ENCODE measurements at regions of chr11 and their contacts with region 1.

Region 1: DNA sequence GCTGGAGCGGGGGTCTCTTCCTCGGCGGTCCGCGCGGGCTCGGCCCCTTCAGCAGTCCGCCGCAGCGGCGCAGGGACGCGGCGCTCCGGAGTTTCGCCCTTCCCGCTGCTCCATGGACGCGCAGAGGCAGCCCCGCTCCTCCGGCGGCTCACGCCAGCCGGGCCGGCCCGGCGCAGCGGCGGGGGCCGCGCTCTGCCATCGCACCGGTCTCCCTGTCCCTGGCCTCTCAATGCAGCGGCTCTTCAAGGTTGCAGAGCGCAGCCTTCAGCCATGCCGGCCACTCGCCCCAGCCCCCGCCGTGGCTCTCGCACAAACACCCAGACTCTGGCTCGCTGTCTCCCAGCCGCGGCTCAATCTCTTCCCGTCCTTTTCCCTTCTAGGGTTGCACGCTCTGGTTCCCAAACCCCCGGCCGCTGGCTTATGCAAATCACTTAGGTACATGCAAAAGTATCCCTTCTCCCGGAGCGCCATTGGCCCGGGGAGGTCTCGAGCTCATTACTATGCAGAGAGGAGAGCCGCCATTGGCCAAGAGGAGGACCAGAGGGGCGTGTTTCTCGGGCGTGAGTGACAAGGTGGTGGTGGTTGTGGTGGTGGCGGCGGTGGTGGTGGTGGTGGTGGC is at the start of gene LGR4:
- DNase-seq: peak; percentile 94 to 95
- H3K4me3 ChIP-seq: peak within 1 kb of the TSS; percentile 92
- H3K27ac ChIP-seq: peak within 1 kb of the TSS; percentile 94
- H3K4me1 ChIP-seq: peaks cover 37% of the 10 kb centered on the region
- H3K27me3 ChIP-seq: no peaks in the 10 kb centered on the region
- CTCF ChIP-seq: no peak
- total RNA-seq, gene LGR4: 33.4 and 37.4 TPM in 2 replicates

Region 2: DNA sequence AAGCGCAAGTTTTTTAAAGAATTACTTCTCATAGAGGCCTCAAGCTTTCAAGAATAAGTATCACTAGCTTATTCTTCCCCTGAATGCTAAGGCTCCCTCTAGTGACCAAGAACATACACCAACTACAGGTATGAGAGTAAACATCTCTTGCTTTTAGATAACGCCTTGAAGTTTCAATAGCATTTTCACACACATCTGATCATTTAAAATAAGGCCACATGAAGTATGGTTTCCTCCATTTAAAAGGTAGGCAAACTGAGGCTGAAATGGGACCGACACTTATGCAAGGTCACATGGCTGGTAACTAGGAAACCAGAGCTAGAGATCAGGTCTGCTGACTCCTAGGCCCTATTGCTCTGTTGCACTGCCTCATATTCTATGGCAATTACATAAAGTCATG is 176.0 kb before region 1 on chr11:
- CTCF ChIA-PET with region 1: no interaction called
- POLR2A ChIA-PET with region 1: interaction called, 25 read pairs
- intact Hi-C with region 1: loop called (anchors 5 kb)
- DNase-seq: peak in 1 of 2 experiments; percentile 4
- H3K4me3 ChIP-seq: no peak overlapping the region
- H3K27ac ChIP-seq: no peak overlapping the region
- H3K4me1 ChIP-seq: no peaks in the 10 kb centered on the region
- H3K27me3 ChIP-seq: no peaks in the 10 kb centered on the region
- CTCF ChIP-seq: peak; percentile 74

Region 3: GRCh38 chr11:27392278-27393114 is 80.0 kb before region 1 on chr11:
- CTCF ChIA-PET with region 1: no interaction called
- POLR2A ChIA-PET with region 1: interaction called, 17 read pairs
- intact Hi-C with region 1: no loop called
- DNase-seq: peak; percentile 25 to 88
- H3K4me3 ChIP-seq: no peak overlapping the region; the same call in 1 of the 2 replicates
- H3K27ac ChIP-seq: peak overlapping the region; percentile 66
- H3K4me1 ChIP-seq: peaks cover 75% of the 10 kb centered on the region
- H3K27me3 ChIP-seq: no peaks in the 10 kb centered on the region
- CTCF ChIP-seq: no peak

Region 4: GRCh38 chr11:27485930-27486773 is 13.6 kb after region 1 on chr11:
- CTCF ChIA-PET with region 1: interaction called, 23 read pairs
- POLR2A ChIA-PET with region 1: interaction called, 7 read pairs
- intact Hi-C with region 1: no loop called
- DNase-seq: peak in 1 of 2 experiments; percentile 54
- H3K4me3 ChIP-seq: no peak overlapping the region
- H3K27ac ChIP-seq: no peak overlapping the region
- H3K4me1 ChIP-seq: no peaks in the 10 kb centered on the region
- H3K27me3 ChIP-seq: no peaks in the 10 kb centered on the region
- CTCF ChIP-seq: peak; percentile 95

Region 5: GRCh38 chr11:27660171-27660570 is 187.7 kb after region 1 on chr11:
- CTCF ChIA-PET with region 1: no interaction called
- POLR2A ChIA-PET with region 1: no interaction called
- intact Hi-C with region 1: no loop called
- DNase-seq: no peak
- H3K4me3 ChIP-seq: no peak overlapping the region
- H3K27ac ChIP-seq: no peak overlapping the region
- H3K4me1 ChIP-seq: no peaks in the 10 kb centered on the region
- H3K27me3 ChIP-seq: no peaks in the 10 kb centered on the region
- CTCF ChIP-seq: no peak

Region 6: GRCh38 chr11:28836285-28837081 is 1364.0 kb after region 1 on chr11:
- CTCF ChIA-PET with region 1: no interaction called
- POLR2A ChIA-PET with region 1: no interaction called
- intact Hi-C with region 1: loop called (anchors 10 kb)
- DNase-seq: peak; percentile 35 to 61
- H3K4me3 ChIP-seq: no peak overlapping the region
- H3K27ac ChIP-seq: peak overlapping the region; percentile 43; the same call in 1 of the 2 replicates
- H3K4me1 ChIP-seq: 0 out of 2 replicates have a peak, but pooled peaks cover 10% of the 10 kb centered on the region
- H3K27me3 ChIP-seq: no peaks in the 10 kb centered on the region
- CTCF ChIP-seq: no peak

Measured in PC-9 (cell line).